Activated CD8-positive, alpha-beta memory T cell treated with anti-CD3 and anti-CD28 coated beads, Interleukin-2, amount 10 ng/mL, durations not matched to agents 7 days and 5 days (primary cell): ENCODE measurements at regions of chr1 and their contacts with region 1.

Region 1: DNA sequence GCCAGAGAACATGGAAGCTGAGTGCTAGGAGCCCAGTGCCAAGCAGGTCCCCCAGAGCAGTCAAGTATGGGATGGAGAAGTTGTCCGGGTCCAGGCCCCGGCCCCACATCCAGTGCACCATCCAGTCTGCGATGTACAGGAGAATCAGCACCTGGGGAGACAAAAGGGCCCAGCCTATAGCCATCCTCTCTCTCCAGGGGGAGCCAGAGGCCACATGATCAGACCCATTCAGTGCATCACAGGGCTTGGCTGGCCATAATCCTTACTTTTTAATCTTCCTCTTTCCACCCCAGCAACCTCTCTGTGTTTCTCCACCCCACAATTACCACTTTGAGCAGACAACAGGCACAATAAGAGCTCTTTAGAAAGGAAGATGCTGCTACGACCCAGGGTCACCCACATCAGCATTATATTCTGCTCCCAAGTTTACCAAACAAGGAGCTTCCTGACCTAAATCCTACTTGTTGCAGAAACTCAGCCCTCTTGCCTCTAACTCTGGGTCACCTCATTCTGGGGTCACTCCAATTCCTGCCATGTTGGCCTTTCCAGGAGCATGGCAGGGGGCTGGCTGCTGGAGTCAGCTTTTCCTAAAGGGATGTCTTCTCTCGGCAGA is 16.4 kb upstream of the RAB29 start:
- DNase-seq: peak; percentile 72
- ATAC-seq: peak; percentile 94
- H3K4me3 Mint-ChIP-seq: no peak overlapping the region
- H3K27ac Mint-ChIP-seq: no peak overlapping the region
- H3K4me1 Mint-ChIP-seq: no peaks in the 10 kb centered on the region
- H3K27me3 Mint-ChIP-seq: no peaks in the 10 kb centered on the region

Region 2: GRCh38 chr1:205700865-205701401 is 90.7 kb before region 1 on chr1:
- CTCF ChIA-PET with region 1: no interaction called
- DNase-seq: no peak
- ATAC-seq: no peak
- H3K4me3 Mint-ChIP-seq: no peak overlapping the region
- H3K27ac Mint-ChIP-seq: no peak overlapping the region
- H3K4me1 Mint-ChIP-seq: peaks cover 2% of the 10 kb centered on the region
- H3K27me3 Mint-ChIP-seq: peaks cover 16% of the 10 kb centered on the region

Region 3: GRCh38 chr1:205739348-205740160 is 52.1 kb before region 1 on chr1:
- CTCF ChIA-PET with region 1: no interaction called
- DNase-seq: no peak
- ATAC-seq: no peak
- H3K4me3 Mint-ChIP-seq: no peak overlapping the region
- H3K27ac Mint-ChIP-seq: no peak overlapping the region
- H3K4me1 Mint-ChIP-seq: peaks cover 42% of the 10 kb centered on the region
- H3K27me3 Mint-ChIP-seq: no peaks in the 10 kb centered on the region

Region 4: DNA sequence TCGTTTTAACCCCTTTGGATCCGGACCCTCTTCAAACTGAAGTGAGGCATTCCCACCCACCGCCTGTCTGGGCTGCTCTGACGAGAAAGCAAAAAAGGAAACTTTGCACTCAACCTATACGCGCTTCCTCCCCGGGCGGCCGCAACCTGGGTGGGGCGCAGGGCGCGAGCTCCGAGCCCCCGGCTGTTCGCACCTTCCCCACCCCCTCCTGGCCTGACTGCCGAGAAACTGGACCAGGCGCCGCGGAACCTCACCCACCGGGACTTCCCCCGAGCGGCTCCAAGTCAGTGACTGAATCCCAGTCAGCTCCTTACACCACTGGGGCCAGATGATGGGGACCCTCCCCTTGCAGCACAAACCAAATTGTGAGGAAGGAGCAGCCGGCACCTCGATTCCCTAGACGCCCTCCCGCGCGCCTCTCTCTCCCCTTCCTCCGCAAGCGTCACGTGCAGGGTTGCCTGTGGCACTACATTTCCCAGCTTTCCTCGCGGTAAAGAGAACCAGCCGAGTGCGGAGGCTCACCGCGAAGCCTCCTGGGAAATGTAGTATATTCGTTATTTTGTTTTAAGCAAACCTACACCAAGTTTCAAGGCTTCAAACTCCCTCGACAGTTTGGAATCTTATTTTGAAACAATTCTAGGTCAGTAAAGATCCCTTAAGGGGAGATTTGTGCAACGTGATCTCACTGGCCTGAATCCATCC is 16.5 kb before region 1 on chr1 and contains the start of gene RAB29:
- CTCF ChIA-PET with region 1: interaction called, 10 read pairs
- DNase-seq: peak; percentile 94
- ATAC-seq: peak; percentile 94
- H3K4me3 Mint-ChIP-seq: peak within 1 kb of the TSS; percentile 89
- H3K27ac Mint-ChIP-seq: peak within 1 kb of the TSS; percentile 93
- H3K4me1 Mint-ChIP-seq: peaks cover 46% of the 10 kb centered on the region
- H3K27me3 Mint-ChIP-seq: no peaks in the 10 kb centered on the region
- total RNA-seq, gene RAB29: 51.0 to 61.4 TPM

Region 5: DNA sequence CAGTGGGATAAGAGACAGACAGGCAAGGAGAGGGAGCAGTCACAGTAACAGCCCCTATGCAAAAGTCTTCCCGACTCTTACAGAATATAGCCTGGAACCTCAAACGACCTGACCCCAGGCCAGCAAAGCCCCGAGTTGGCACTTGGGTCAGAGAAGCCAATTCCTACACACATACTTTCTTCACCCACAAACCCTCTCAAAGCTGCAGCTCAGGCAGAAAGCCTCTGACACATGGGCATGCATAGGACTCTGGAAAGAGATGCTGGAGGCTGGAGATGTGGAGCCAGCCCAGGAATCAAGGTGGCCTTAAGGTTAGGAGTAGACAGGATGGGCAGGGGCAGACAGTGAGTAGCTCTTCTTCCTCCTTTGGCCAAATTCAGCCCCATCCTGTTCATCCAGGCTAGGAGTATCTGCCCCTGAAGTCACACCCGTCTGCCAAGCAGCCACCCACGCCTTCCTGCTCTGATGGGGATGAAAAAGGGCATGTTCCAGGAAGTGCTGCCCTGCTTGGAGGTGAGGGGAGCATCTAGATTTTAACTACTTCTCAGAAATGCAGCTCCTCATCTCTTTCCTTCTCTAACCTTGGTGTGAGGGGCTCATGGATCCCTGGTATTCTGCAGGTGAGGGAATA is 13.5 kb after region 1 on chr1:
- CTCF ChIA-PET with region 1: interaction called, 18 read pairs
- DNase-seq: peak; percentile 53
- ATAC-seq: peak; percentile 54
- H3K4me3 Mint-ChIP-seq: no peak overlapping the region
- H3K27ac Mint-ChIP-seq: peak overlapping the region; percentile 58
- H3K4me1 Mint-ChIP-seq: peaks cover 24% of the 10 kb centered on the region
- H3K27me3 Mint-ChIP-seq: no peaks in the 10 kb centered on the region

Region 6: DNA sequence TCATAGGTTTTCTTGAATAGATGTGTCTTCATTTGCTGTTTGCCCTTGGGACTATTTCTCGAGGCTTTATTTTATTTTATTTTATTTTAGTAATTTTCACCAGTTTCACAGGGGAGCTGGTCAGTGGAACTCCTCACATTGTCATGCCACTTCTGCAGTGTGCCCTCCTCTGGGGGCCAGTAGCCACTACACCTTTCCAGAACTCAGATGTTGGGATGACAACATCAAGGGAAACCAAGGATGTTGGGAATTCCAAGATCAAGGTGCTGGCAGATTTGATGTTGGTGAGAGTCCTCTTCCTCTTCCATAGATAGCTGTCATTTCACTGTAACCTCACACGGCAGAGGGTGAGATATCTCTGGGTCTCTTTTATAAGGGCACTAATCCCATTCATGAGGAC is 116.1 kb after region 1 on chr1:
- CTCF ChIA-PET with region 1: interaction called, 10 read pairs
- DNase-seq: no peak
- ATAC-seq: no peak
- H3K4me3 Mint-ChIP-seq: no peak overlapping the region
- H3K27ac Mint-ChIP-seq: no peak overlapping the region
- H3K4me1 Mint-ChIP-seq: no peaks in the 10 kb centered on the region
- H3K27me3 Mint-ChIP-seq: peaks cover 30% of the 10 kb centered on the region